PC-3 (cell line): ENCODE measurements at regions of chr17 and their contacts with region 1.

Region 1: GRCh38 chr17:60392042-60392844 is at the start of gene USP32:
- DNase-seq: peak; percentile 99
- ATAC-seq: peak; percentile 84
- H3K4me3 ChIP-seq: peak within 1 kb of the TSS; percentile 83
- H3K27ac ChIP-seq: peak within 1 kb of the TSS; percentile 86
- H3K4me1 ChIP-seq: peaks cover 23% of the 10 kb centered on the region
- H3K27me3 ChIP-seq: no peaks in the 10 kb centered on the region
- CTCF ChIP-seq: peak; percentile 33; the same call in 1 of the 2 replicates
- total RNA-seq, gene USP32: 34.0 and 34.1 TPM in 2 replicates

Region 2: GRCh38 chr17:60188759-60189158 is 203.5 kb before region 1 on chr17:
- CTCF ChIA-PET with region 1: no interaction called
- POLR2A ChIA-PET with region 1: no interaction called
- intact Hi-C with region 1: no loop called
- DNase-seq: no peak
- ATAC-seq: no peak
- H3K4me3 ChIP-seq: no peak overlapping the region
- H3K27ac ChIP-seq: no peak overlapping the region
- H3K4me1 ChIP-seq: peaks cover 16% of the 10 kb centered on the region
- H3K27me3 ChIP-seq: no peaks in the 10 kb centered on the region
- CTCF ChIP-seq: no peak

Region 3: DNA sequence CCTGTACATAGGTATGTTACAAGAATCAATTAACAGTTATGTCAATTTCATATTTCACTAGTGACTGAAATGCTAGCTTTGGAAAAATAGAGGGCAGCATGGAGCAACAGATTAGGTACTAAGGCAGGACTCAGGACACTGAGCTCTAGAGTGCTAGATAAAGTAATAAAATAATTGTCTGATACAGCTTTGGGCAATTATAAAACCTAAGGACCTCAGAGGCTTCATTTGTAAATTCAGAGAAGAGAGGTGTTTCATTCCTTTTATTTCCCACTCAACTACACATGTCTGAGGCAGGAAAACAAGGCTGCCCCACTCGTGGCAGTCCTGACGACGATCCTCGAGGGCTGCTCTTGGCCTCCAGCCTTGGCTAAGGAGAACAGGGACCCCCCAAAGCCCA is 161.0 kb before region 1 on chr17:
- CTCF ChIA-PET with region 1: interaction called, 3 read pairs
- POLR2A ChIA-PET with region 1: no interaction called
- intact Hi-C with region 1: loop called (anchors 1 kb)
- DNase-seq: peak; percentile 61
- ATAC-seq: peak; percentile 84
- H3K4me3 ChIP-seq: no peak overlapping the region
- H3K27ac ChIP-seq: no peak overlapping the region
- H3K4me1 ChIP-seq: no peaks in the 10 kb centered on the region
- H3K27me3 ChIP-seq: no peaks in the 10 kb centered on the region
- CTCF ChIP-seq: peak; percentile 87

Region 4: GRCh38 chr17:60332574-60332973 is 59.7 kb before region 1 on chr17:
- CTCF ChIA-PET with region 1: interaction called, 5 read pairs
- POLR2A ChIA-PET with region 1: interaction called, 19 read pairs
- intact Hi-C with region 1: no loop called
- DNase-seq: no peak
- ATAC-seq: peak; percentile 67
- H3K4me3 ChIP-seq: no peak overlapping the region
- H3K27ac ChIP-seq: no peak overlapping the region
- H3K4me1 ChIP-seq: 0 out of 2 replicates have a peak, but pooled peaks cover 6% of the 10 kb centered on the region
- H3K27me3 ChIP-seq: no peaks in the 10 kb centered on the region
- CTCF ChIP-seq: no peak

Region 5: GRCh38 chr17:60372790-60373483 is 19.3 kb before region 1 on chr17:
- CTCF ChIA-PET with region 1: interaction called, 3 read pairs
- POLR2A ChIA-PET with region 1: interaction called, 5 read pairs
- intact Hi-C with region 1: loop called (anchors 1 kb)
- DNase-seq: peak; percentile 88
- ATAC-seq: peak; percentile 99
- H3K4me3 ChIP-seq: peak overlapping the region; percentile 14; the same call in 1 of the 2 replicates
- H3K27ac ChIP-seq: peak overlapping the region; percentile 69
- H3K4me1 ChIP-seq: peaks cover 23% of the 10 kb centered on the region
- H3K27me3 ChIP-seq: no peaks in the 10 kb centered on the region
- CTCF ChIP-seq: no peak

Region 6: GRCh38 chr17:60442271-60443173 is 50.3 kb after region 1 on chr17:
- CTCF ChIA-PET with region 1: no interaction called
- POLR2A ChIA-PET with region 1: no interaction called
- intact Hi-C with region 1: no loop called
- DNase-seq: peak; percentile 26
- ATAC-seq: no peak
- H3K4me3 ChIP-seq: no peak overlapping the region
- H3K27ac ChIP-seq: no peak overlapping the region
- H3K4me1 ChIP-seq: peaks cover 4% of the 10 kb centered on the region; the same call in 1 of the 2 replicates
- H3K27me3 ChIP-seq: no peaks in the 10 kb centered on the region
- CTCF ChIP-seq: no peak